Endothelial cell of umbilical vein (primary cell): ENCODE measurements at regions of chr3 and their contacts with region 1.

Region 1: GRCh38 chr3:99674086-99674789 is 35.8 kb downstream of the COL8A1 start:
- DNase-seq: peak; percentile 77
- H3K4me3 ChIP-seq: no peak overlapping the region
- H3K27ac ChIP-seq: peak overlapping the region; percentile 3
- H3K4me1 ChIP-seq: peaks cover 15% of the 10 kb centered on the region
- H3K27me3 ChIP-seq: no peaks in the 10 kb centered on the region
- CTCF ChIP-seq: no peak
- POLR2A ChIP-seq: no peak

Region 2: DNA sequence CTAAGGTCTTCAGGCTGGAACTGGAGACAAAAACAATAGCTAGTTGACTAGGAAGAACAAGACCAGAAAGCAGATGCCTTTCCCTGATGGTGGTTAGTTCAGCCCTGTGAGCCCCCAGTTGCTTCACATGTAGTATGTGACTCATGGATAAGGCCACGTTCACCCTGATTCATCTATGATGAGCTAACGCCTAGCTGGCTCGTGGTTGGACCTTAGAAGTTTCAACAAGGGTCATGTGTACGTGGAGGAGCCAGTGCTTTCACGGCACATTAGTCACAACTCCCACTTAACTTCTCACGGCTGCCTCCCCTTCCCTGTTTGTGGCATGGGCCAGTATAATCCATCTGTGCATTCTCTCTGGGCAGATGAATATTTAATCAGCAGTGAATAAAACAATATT is 15.2 kb before region 1 on chr3:
- CTCF ChIA-PET with region 1: interaction called, 10 read pairs
- POLR2A ChIA-PET with region 1: no interaction called
- dilution Hi-C with region 1: no loop called
- intact Hi-C with region 1: no loop called
- DNase-seq: peak; percentile 91
- H3K4me3 ChIP-seq: no peak overlapping the region
- H3K27ac ChIP-seq: peak overlapping the region; percentile 98
- H3K4me1 ChIP-seq: peaks cover 32% of the 10 kb centered on the region
- H3K27me3 ChIP-seq: no peaks in the 10 kb centered on the region
- CTCF ChIP-seq: no peak
- POLR2A ChIP-seq: peak; percentile 72

Region 3: GRCh38 chr3:99859825-99860224 is 185.6 kb after region 1 on chr3:
- CTCF ChIA-PET with region 1: no interaction called
- POLR2A ChIA-PET with region 1: no interaction called
- dilution Hi-C with region 1: no loop called
- intact Hi-C with region 1: no loop called
- DNase-seq: peak; percentile 32
- H3K4me3 ChIP-seq: no peak overlapping the region
- H3K27ac ChIP-seq: peak overlapping the region; percentile 2
- H3K4me1 ChIP-seq: peaks cover 26% of the 10 kb centered on the region
- H3K27me3 ChIP-seq: no peaks in the 10 kb centered on the region
- CTCF ChIP-seq: no peak
- POLR2A ChIP-seq: no peak